Astrocyte of the cerebellum (primary cell): ENCODE measurements at regions of chr7 and their contacts with region 1.

Region 1: DNA sequence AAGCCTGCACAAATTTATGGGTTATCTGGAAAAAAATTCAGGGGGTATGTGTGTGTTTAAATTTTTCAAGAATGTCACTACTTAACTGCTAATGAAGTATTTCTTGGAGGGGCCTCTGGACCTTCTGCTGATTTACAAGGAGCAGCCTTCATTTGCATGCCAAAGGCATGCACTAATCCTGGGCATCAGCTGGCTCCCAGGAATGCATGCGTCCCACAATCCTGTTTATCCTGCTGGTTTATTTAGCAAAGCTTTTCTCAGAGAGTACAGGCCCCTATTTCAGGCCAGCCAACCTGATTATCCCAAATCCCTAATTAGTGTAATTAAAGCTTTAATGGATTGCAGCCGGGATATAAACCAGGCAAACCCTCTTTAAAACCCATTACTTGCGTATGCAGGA is 170.4 kb downstream of the TAX1BP1 start:
- DNase-seq: no peak
- H3K4me3 ChIP-seq: no peak overlapping the region
- CTCF ChIP-seq: no peak

Region 2: DNA sequence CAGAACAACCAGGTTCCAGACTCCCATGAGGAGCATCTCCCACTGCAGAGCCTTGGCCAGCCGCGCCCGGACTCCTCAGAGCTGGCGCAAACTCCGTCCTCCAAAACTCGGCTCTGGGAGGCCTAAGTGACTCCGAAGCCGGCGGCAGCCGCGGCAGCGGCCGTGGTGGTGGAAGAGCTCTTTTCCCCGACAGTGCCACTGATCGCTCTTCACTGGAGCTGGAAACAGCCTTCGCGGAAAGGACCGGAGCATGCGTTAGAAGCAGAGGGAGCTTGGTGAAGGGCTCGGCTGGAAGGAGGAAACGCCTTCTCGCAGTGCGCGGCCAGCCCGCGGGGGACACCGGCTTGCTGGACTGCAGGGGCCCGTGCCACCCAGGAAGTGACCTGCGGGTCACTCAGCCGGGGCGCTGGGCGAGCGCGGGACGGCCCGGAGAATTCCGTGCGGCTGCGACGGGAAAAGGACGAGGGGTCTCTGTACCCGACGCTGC is 705.4 kb before region 1 on chr7:
- in situ Hi-C with region 1: loop called (anchors 5 kb)
- DNase-seq: no peak
- H3K4me3 ChIP-seq: no peak overlapping the region
- CTCF ChIP-seq: no peak

Region 3: GRCh38 chr7:28029051-28029450 is 118.7 kb after region 1 on chr7:
- in situ Hi-C with region 1: no loop called
- DNase-seq: no peak
- H3K4me3 ChIP-seq: no peak overlapping the region
- CTCF ChIP-seq: no peak